H1 (cell line): ENCODE measurements at regions of chr20 and their contacts with region 1.

Region 1: GRCh38 chr20:49982346-49983122 is at the start of gene SNAI1:
- DNase-seq: peak in 1 of 2 experiments; percentile 87
- H3K4me3 ChIP-seq: peak within 1 kb of the TSS; percentile 60 to 93 (median 73)
- H3K27ac ChIP-seq: 0 out of 2 replicates have a peak within 1 kb of the TSS, but pooled peaks have one; percentile 31
- H3K4me1 ChIP-seq: peaks cover 9 to 46% (median 34%) of the 10 kb centered on the region in 4 experiments
- H3K27me3 ChIP-seq: peaks cover 0 to 17% (median 15%) of the 10 kb centered on the region in 4 experiments; a peak in 6 of 7 replicates
- CTCF ChIP-seq: peak; percentile 31 to 54 (median 39)
- EP300 ChIP-seq: no peak
- POLR2A ChIP-seq: peak; percentile 98
- RAD21 ChIP-seq: peak; percentile 26 to 40; a peak in 3 of 4 replicates
- total RNA-seq, gene SNAI1: 6.5 and 7.7 TPM in 2 replicates

Region 2: GRCh38 chr20:49964964-49965780 is 17.4 kb before region 1 on chr20:
- CTCF ChIA-PET with region 1: interaction called, 22 read pairs
- POLR2A ChIA-PET with region 1: interaction called, 8 read pairs
- DNase-seq: peak in 1 of 2 experiments; percentile 84
- H3K4me3 ChIP-seq: no peak overlapping the region
- H3K27ac ChIP-seq: no peak overlapping the region
- H3K4me1 ChIP-seq: peaks cover 0 to 2% (median under 1%) of the 10 kb centered on the region in 4 experiments; a peak in 2 of 7 replicates
- H3K27me3 ChIP-seq: no peaks in the 10 kb centered on the region
- CTCF ChIP-seq: peak; percentile 74 to 92 (median 88)
- EP300 ChIP-seq: no peak
- POLR2A ChIP-seq: no peak
- RAD21 ChIP-seq: peak; percentile 48 to 66

Region 3: DNA sequence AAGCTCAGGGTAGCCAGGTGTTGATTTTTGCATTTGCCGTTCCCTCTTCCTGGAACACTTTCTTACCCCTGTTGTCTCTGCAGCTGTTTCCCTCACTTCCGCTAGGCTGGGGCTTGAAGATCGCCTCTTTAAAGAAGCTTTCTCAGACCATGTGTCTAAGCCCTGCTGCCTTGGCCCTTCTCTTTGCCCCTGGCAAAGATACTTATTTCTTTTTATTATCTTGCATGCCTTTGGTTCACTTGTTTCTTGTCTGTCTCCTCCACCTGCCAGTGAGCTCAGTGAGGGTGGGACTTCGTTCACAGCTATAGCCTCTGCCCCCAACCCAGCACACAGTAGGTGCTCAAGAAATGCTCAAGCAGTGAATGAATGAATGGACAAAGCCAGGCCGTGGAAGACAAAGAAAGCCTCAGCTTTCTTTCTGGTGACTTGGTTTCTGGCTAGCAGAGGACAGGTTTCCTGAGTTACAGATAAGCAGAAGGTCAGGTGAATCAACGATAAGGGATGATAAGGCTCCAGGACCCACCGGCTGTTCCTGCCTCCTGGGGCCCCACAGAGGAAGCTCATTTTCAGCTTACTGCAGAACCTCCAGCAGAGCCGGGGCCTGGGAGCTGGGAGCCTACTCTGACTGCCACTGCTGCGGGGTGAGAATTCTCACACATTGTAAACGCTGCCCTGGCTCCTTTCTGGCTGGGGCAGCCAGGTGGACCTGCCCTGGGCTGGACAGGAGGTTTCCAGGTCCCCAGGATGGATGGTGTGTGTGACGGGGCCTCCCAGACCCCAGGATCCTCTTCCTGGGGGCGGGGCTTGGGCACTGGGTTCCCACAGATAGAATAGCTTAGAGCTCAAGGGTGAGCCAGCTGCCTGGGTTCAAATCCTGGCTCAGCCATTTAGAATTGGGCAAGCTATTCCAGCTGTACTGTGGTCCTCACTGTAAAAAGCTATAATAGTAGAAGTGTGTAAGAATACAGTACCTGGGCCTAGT is 30.0 kb after region 1 on chr20:
- CTCF ChIA-PET with region 1: interaction called, 5 read pairs
- POLR2A ChIA-PET with region 1: interaction called, 183 read pairs
- DNase-seq: no peak
- H3K4me3 ChIP-seq: no peak overlapping the region
- H3K27ac ChIP-seq: no peak overlapping the region
- H3K4me1 ChIP-seq: peaks cover 0 to 23% (median 17%) of the 10 kb centered on the region in 4 experiments; a peak in 6 of 7 replicates
- H3K27me3 ChIP-seq: peaks cover 0 to 13% (median 9%) of the 10 kb centered on the region in 4 experiments; a peak in 4 of 7 replicates
- CTCF ChIP-seq: no peak
- EP300 ChIP-seq: no peak
- POLR2A ChIP-seq: no peak
- RAD21 ChIP-seq: no peak

Region 4: DNA sequence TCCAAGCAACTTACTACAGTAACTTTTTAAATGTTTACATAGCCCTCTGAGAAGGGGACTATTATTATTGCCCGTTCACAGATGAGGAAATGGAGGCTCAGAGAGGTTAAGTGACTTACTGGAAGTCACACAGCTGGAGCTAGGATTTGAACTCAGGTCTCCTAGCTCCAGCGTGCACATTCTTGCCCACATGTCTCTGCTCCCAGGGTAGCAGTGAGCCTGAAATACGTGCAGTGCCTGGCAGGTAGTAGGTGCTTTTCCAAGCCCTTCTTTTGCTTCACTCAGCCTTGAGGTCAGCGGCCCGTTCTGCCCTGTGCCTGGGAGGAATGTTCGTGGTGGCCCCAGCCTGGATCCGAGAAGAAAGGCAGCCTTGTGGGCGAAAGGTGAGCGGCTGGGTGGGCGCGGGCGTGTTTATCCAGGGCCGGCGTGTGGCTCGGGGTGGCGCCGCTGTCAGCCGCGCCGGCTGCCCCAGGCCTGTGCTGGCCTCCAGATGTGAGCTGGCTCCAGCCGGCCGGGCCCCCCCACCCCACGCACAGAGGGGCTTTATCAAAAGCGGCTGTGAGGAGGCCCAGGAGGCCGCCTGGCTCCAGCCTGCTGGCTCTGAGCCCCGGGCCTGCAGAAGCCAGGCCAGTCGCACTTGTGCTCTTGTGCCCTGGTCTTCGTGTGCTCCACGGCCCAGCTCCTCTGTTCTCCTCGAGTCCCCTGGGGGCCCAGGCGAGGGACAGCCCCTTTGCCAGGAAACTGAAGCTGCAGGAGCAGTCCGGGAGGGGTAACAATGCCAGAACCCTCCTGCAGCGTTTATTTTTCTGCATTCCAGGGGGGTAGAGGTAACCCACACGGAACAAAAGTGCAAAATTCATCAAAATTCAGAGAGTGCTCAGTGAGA is 72.3 kb after region 1 on chr20:
- CTCF ChIA-PET with region 1: interaction called, 514 read pairs
- POLR2A ChIA-PET with region 1: interaction called, 287 read pairs
- DNase-seq: no peak
- H3K4me3 ChIP-seq: no peak overlapping the region
- H3K27ac ChIP-seq: no peak overlapping the region
- H3K4me1 ChIP-seq: peaks cover 0 to 5% (median 2%) of the 10 kb centered on the region in 4 experiments; a peak in 3 of 7 replicates
- H3K27me3 ChIP-seq: peaks cover 0 to 2% (median 0%) of the 10 kb centered on the region in 4 experiments; a peak in 1 of 7 replicates
- CTCF ChIP-seq: no peak
- EP300 ChIP-seq: no peak
- POLR2A ChIP-seq: no peak
- RAD21 ChIP-seq: no peak

Region 5: DNA sequence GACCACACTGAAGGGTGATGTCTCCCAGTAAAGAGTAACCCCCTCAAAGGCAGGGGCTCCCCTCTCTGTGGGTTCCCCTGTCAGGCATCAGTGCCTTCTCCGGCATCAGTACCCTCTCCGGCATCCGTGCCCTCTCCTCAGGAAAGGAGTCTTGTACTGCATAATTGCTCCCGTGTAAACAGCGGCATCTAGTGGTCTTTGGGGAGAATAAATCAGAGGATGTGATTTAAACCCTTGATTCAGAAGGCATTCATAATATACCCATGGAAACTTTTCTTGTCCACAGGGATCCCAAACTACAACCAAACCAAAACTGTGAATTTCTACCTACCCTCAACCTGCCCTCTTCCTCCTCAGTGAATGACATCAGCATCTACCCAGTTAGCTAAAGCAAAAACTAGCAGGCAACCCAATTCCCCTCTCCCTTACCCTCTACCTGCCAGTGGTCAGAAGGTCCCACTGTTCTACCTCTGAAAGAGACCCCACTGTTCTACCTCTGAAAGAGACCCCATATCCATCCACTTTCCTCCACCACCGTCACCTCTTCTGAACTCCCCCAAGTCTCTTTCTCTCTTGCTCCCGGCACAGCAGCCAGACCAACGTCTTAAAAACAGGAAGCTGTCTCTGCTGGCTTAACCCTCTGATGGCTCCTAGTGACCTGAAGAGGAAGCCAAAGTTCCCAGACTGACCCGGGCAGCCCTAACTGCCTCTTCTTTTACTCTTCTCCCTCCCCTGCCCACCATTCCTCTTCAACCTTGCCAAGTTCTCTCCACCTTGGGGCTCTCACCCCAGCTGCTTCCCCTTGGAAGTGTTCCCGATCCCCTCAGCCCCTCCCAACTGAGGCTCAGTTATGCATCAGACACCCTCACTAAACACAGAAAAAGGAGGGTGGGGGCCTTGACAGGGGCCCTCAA is 103.2 kb after region 1 on chr20:
- CTCF ChIA-PET with region 1: interaction called, 54 read pairs
- POLR2A ChIA-PET with region 1: interaction called, 31 read pairs
- DNase-seq: no peak
- H3K4me3 ChIP-seq: no peak overlapping the region
- H3K27ac ChIP-seq: no peak overlapping the region; the same call in 1 of the 2 replicates
- H3K4me1 ChIP-seq: peaks cover 0 to 13% (median 6%) of the 10 kb centered on the region in 4 experiments
- H3K27me3 ChIP-seq: no peaks in the 10 kb centered on the region; a peak in 1 of 7 replicates
- CTCF ChIP-seq: peak; percentile 38 to 83 (median 72)
- EP300 ChIP-seq: no peak
- POLR2A ChIP-seq: no peak
- RAD21 ChIP-seq: peak; percentile 79 to 88

Region 6: GRCh38 chr20:50153485-50154377 is 171.2 kb after region 1 on chr20 and contains the start of gene PEDS1:
- CTCF ChIA-PET with region 1: interaction called, 14 read pairs
- POLR2A ChIA-PET with region 1: interaction called, 3 read pairs
- DNase-seq: peak in 1 of 2 experiments; percentile 87
- H3K4me3 ChIP-seq: peak within 1 kb of the TSS; percentile 61 to 98 (median 86)
- H3K27ac ChIP-seq: peak within 1 kb of the TSS; percentile 26; the same call in 1 of the 2 replicates
- H3K4me1 ChIP-seq: peaks cover 9 to 27% (median 16%) of the 10 kb centered on the region in 4 experiments
- H3K27me3 ChIP-seq: peaks cover 0 to 3% (median under 1%) of the 10 kb centered on the region in 4 experiments; a peak in 2 of 7 replicates
- CTCF ChIP-seq: no peak
- EP300 ChIP-seq: no peak
- POLR2A ChIP-seq: peak; percentile 70 to 75
- RAD21 ChIP-seq: no peak
- total RNA-seq, gene PEDS1: 28.9 and 33.3 TPM in 2 replicates